HAP-1 (cell line): ENCODE measurements at regions of chr7 and their contacts with region 1.

Region 1: GRCh38 chr7:113421696-113422330 is 303.5 kb upstream of the SMIM30 start:
- DNase-seq: peak; percentile 77 to 88
- H3K4me3 ChIP-seq: no peak overlapping the region
- H3K4me1 ChIP-seq: no peaks in the 10 kb centered on the region
- H3K27me3 ChIP-seq: no peaks in the 10 kb centered on the region

Region 2: GRCh38 chr7:113159746-113160339 is 262.0 kb before region 1 on chr7:
- in situ Hi-C with region 1: loop called (anchors 25 kb)
- DNase-seq: peak; percentile 23 to 51
- H3K4me3 ChIP-seq: no peak overlapping the region
- H3K4me1 ChIP-seq: no peaks in the 10 kb centered on the region
- H3K27me3 ChIP-seq: no peaks in the 10 kb centered on the region; the same call in 1 of the 2 replicates

Region 3: GRCh38 chr7:113289140-113289740 is 132.6 kb before region 1 on chr7:
- in situ Hi-C with region 1: no loop called
- DNase-seq: peak in 1 of 2 experiments; percentile 16
- H3K4me3 ChIP-seq: no peak overlapping the region
- H3K4me1 ChIP-seq: no peaks in the 10 kb centered on the region
- H3K27me3 ChIP-seq: no peaks in the 10 kb centered on the region

Region 4: GRCh38 chr7:113918946-113919345 is 497.1 kb after region 1 on chr7 and contains the start of gene PPP1R3A:
- in situ Hi-C with region 1: no loop called
- DNase-seq: no peak
- H3K4me3 ChIP-seq: no peak within 1 kb of the TSS
- H3K4me1 ChIP-seq: no peaks in the 10 kb centered on the region
- H3K27me3 ChIP-seq: peaks cover 3% of the 10 kb centered on the region; the same call in 1 of the 2 replicates

Region 5: DNA sequence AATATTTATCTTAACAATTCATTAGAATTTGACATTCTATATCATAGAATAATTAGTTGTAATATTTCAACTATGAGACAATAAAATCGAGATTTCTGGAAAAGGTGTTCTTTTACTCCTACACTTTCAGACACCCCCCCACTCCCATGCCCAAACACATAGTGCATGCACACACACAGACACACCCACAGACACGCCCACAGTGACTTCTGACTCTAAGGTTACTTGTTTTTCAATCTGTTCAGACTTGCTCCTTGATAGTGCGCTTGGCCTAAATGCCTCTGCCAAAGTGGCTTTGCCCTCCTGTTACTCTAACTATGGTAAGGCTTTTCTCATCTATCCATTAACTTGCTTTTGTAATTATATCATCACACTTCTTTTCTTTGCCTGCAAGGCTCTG is 641.0 kb after region 1 on chr7:
- in situ Hi-C with region 1: no loop called
- DNase-seq: no peak
- H3K4me3 ChIP-seq: no peak overlapping the region
- H3K4me1 ChIP-seq: no peaks in the 10 kb centered on the region
- H3K27me3 ChIP-seq: no peaks in the 10 kb centered on the region

Region 6: GRCh38 chr7:114109299-114109698 is 687.5 kb after region 1 on chr7:
- in situ Hi-C with region 1: no loop called
- DNase-seq: no peak
- H3K4me3 ChIP-seq: no peak overlapping the region
- H3K4me1 ChIP-seq: no peaks in the 10 kb centered on the region
- H3K27me3 ChIP-seq: peaks cover 4% of the 10 kb centered on the region; the same call in 1 of the 2 replicates